ENCODE measurements at regions of chr2 and their contacts with region 1.

Region 1: DNA sequence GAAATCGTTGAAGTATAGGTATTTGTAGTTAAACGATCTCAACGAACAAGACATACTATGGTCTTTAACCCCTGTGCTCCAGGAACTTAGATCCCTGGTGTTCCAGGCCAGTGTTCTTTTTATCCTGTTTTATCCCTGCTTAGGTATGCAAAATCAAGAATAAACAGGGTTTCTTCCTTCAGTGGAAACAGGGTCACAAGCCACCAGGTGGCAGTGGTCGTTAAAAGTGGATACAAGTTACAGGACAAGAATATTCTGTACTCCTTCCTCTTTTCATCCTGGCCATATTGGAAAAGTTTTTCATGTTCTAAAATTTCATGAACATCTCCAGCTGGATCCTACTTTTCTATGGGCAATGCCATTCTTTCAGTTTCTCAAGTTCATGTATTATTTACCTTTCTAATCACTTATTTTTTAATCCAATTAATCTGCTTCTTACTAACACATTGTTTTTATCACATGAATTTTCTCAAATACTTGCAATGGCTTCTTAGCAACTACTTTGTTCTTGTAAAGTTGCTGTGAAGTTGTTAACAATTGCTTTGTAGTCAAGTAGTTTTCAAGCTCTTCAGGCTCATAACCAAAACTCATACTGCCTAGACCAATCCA is 16.4 kb upstream of the HNMT start:
- DNase-seq: peak; percentile 28 to 90 (median 76)

Region 2: DNA sequence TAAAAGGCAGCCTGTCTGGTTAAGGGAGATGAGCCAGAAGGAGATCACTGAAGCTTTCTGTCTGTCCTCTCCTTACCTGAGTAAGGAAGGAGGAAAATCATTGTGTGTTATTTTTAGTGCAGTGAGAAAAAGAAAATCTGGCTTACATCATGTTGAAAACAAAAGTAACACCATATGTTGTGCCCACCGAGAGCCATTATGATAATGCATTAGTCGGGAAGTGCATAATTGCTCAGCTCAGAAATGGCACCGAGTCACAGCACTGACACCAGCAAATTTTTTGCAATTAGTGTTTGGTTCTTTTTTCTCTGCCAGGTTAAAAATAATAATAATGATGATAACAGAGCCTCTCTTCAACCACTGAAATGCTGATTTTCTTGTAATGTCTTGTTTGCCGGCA is 63.1 kb after region 1 on chr2:
- intact Hi-C with region 1: no loop called
- DNase-seq: no peak

Region 3: DNA sequence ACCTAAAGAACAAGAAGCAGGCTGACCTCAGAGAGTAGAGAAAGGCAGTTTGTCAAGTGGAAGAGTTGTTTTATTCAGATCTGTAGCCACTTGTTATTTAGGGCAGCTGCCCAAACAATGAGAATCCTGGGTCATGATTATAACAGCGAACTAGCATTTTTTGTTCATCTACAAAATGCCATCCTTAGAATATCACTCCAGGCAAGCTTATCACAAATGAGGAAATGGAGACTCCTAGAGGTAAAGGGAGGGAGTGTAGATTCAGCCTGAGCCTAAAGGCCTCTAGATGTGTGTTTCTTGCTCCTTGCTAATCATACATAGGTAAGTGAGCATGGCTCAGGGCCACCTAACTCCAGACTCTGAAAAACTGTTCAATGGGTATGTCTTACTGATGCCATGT is 142.5 kb after region 1 on chr2:
- intact Hi-C with region 1: loop called (anchors 5 kb)
- DNase-seq: peak in 2 of 42 donors; percentile 23 to 44

Region 4: DNA sequence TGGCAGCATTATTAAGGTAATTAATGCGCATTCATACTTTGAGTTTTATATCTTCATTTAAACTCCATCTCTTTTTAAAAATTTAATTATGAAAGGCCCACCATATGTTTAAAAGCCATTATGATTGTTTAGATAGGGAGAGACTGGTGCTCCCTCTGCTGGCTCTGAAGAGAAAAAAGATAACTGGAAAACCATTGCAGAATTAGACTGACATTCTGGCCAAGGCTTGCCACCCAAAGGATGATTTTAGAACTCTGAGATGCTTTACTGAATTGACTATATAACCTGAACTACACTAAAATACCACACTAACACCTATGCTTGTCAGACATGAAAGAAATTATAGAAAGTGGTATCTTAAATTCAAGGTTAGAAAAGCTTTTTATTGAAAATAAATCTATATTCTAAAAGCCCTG is 426.2 kb after region 1 on chr2:
- intact Hi-C with region 1: loop called (anchors 10 kb)
- DNase-seq: peak in 17 of 42 donors; percentile 8 to 64 (median 26)